ENCODE measurements at regions of chr5 and their contacts with region 1.

Region 1: GRCh38 chr5:79143684-79144379 is 32.2 kb downstream of the BHMT start:
- DNase-seq: no peak
- ATAC-seq: no peak
- H3K4me3 ChIP-seq: no peak overlapping the region
- H3K27ac ChIP-seq: no peak overlapping the region
- H3K4me1 ChIP-seq: no peaks in the 10 kb centered on the region
- H3K27me3 ChIP-seq: no peaks in the 10 kb centered on the region
- CTCF ChIP-seq: no peak

Region 2: GRCh38 chr5:79001471-79001870 is 142.4 kb before region 1 on chr5:
- intact Hi-C with region 1: no loop called
- DNase-seq: no peak
- ATAC-seq: no peak
- H3K4me3 ChIP-seq: no peak overlapping the region
- H3K27ac ChIP-seq: no peak overlapping the region
- H3K4me1 ChIP-seq: no peaks in the 10 kb centered on the region
- H3K27me3 ChIP-seq: no peaks in the 10 kb centered on the region
- CTCF ChIP-seq: no peak

Region 3: DNA sequence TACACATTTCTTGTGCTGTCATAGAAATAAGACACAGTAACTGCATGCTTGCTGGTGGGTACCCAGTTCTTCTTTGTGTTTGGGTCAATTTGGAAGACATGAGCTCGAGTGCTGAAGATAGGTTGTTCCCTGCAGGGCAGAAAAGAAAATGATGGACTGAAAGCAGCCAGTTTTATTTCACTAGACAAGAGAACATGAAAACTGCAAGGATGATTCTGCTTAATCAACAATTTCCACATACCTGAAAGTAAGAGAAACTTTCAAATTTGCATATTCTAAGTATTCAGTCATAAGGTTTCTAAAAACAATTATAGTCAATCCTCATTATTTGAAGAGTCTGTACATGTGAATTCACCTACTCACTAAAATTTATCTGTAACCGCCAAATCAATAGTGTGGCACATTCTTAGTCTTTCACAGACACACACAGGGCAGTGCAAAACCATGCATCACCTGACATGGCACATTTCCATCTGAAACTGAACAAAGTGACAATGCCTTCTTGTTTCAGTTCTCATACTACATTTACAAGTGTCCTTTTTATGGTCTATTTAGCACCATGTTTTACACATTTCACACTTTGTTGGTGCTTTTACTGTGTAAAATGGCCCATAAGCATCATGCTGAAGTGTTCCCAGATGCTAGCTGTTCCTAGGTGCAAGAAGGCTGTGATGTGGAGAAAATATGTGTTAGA is 313.2 kb after region 1 on chr5:
- intact Hi-C with region 1: loop called (anchors 10 kb)
- DNase-seq: no peak
- ATAC-seq: no peak
- H3K4me3 ChIP-seq: no peak overlapping the region
- H3K27ac ChIP-seq: no peak overlapping the region
- H3K4me1 ChIP-seq: no peaks in the 10 kb centered on the region
- H3K27me3 ChIP-seq: no peaks in the 10 kb centered on the region
- CTCF ChIP-seq: no peak

Measured in psoas muscle (tissue), 8 donors.